ENCODE measurements at regions of chr5 and their contacts with region 1.

Region 1: DNA sequence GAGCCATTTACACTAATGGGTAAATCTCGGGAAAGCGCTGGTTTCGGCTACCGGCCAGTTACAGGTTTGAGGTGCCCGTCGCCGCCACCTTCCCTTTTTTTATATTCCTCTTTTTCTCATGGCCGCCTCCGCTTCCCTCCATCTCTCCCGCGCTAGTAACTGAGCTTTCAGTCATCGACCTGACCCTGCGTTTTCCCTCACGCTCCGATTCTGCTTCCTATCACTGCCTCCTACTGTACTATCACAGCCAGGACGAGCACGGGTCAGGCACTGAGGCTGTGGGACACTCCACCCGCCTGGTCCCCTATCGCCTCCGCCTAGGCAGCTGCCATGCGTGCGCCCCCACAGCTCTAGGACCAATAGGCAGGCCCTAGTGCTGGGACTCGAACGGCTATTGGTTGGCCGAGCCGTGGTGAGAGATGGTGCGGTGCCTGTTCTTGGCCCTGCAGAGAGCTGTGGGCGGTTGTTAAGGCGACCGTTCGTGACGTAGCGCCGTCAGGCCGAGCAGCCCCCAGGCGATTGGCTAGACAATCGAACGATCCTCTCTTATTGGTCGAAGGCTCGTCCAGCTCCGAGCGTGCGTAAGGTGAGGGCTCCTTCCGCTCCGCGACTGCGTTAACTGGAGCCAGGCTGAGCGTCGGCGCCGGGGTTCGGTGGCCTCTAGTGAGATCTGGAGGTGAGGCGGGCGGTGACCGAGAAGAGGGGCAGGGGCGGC is at the start of gene HMGCR:
- DNase-seq: peak; percentile 98 to 99
- H3K4me3 ChIP-seq: peak within 1 kb of the TSS; percentile 69 to 78
- H3K27ac ChIP-seq: peak within 1 kb of the TSS; percentile 75 to 87
- H3K4me1 ChIP-seq: peaks cover 0 to 2% of the 10 kb centered on the region in 2 donors
- H3K27me3 ChIP-seq: no peaks in the 10 kb centered on the region
- CTCF ChIP-seq: peak in 1 of 3 experiments; percentile 7
- total RNA-seq, gene HMGCR: 4.9 TPM

Region 2: GRCh38 chr5:74684900-74685851 is 651.6 kb before region 1 on chr5 and contains the start of gene HEXB:
- intact Hi-C with region 1: loop called (anchors 2 kb)
- DNase-seq: peak; percentile 58 to 95
- H3K4me3 ChIP-seq: peak within 1 kb of the TSS; percentile 76 to 92
- H3K27ac ChIP-seq: peak within 1 kb of the TSS; percentile 90 to 91
- H3K4me1 ChIP-seq: peaks cover 0 to 11% of the 10 kb centered on the region in 2 donors
- H3K27me3 ChIP-seq: no peaks in the 10 kb centered on the region
- CTCF ChIP-seq: no peak
- total RNA-seq, gene HEXB: 124 TPM

Region 3: GRCh38 chr5:75053304-75054133 is 283.3 kb before region 1 on chr5:
- intact Hi-C with region 1: loop called (anchors 2 kb)
- DNase-seq: peak in 1 of 2 donors; percentile 74
- H3K4me3 ChIP-seq: peak overlapping the region; percentile 81 to 90
- H3K27ac ChIP-seq: peak overlapping the region; percentile 96 to 98
- H3K4me1 ChIP-seq: peaks cover 4 to 22% of the 10 kb centered on the region in 2 donors
- H3K27me3 ChIP-seq: no peaks in the 10 kb centered on the region
- CTCF ChIP-seq: peak in 2 of 3 experiments; percentile 3 to 31

Region 4: GRCh38 chr5:75511435-75512384 is 174.9 kb after region 1 on chr5 and contains the starts of genes CERT1 and POLK:
- intact Hi-C with region 1: loop called (anchors 1 kb)
- DNase-seq: peak; percentile 93 to 99
- H3K4me3 ChIP-seq: peak within 1 kb of the TSS; percentile 86 to 95
- H3K27ac ChIP-seq: peak within 1 kb of the TSS; percentile 93 to 95
- H3K4me1 ChIP-seq: peaks cover 6 to 24% of the 10 kb centered on the region in 2 donors
- H3K27me3 ChIP-seq: no peaks in the 10 kb centered on the region
- CTCF ChIP-seq: no peak
- total RNA-seq, gene CERT1: 29.8 TPM
- total RNA-seq, gene POLK: 19.4 TPM

Region 5: GRCh38 chr5:75681125-75681830 is 344.5 kb after region 1 on chr5:
- intact Hi-C with region 1: loop called (anchors 10 kb)
- DNase-seq: no peak
- H3K4me3 ChIP-seq: peak overlapping the region in 1 of 2 donors; percentile 41
- H3K27ac ChIP-seq: no peak overlapping the region
- H3K4me1 ChIP-seq: no peaks in the 10 kb centered on the region
- H3K27me3 ChIP-seq: no peaks in the 10 kb centered on the region
- CTCF ChIP-seq: peak; percentile 47 to 83 (median 76)

Measured in ascending aorta (tissue), 2 donors.